Transverse colon (tissue), 4 donors: ENCODE measurements at regions of chr9 and their contacts with region 1.

Region 1: GRCh38 chr9:128548876-128549275 is 3.5 kb upstream of the SPTAN1 start:
- DNase-seq: no peak
- H3K4me3 ChIP-seq: no peak overlapping the region
- H3K27ac ChIP-seq: peak overlapping the region in 3 of 4 donors; percentile 97 to 99 (median 99)
- H3K4me1 ChIP-seq: peaks cover 8 to 35% (median 22%) of the 10 kb centered on the region in 4 donors
- H3K27me3 ChIP-seq: no peaks in the 10 kb centered on the region
- CTCF ChIP-seq: no peak
- EP300 ChIP-seq: no peak
- POLR2A ChIP-seq: no peak

Region 2: DNA sequence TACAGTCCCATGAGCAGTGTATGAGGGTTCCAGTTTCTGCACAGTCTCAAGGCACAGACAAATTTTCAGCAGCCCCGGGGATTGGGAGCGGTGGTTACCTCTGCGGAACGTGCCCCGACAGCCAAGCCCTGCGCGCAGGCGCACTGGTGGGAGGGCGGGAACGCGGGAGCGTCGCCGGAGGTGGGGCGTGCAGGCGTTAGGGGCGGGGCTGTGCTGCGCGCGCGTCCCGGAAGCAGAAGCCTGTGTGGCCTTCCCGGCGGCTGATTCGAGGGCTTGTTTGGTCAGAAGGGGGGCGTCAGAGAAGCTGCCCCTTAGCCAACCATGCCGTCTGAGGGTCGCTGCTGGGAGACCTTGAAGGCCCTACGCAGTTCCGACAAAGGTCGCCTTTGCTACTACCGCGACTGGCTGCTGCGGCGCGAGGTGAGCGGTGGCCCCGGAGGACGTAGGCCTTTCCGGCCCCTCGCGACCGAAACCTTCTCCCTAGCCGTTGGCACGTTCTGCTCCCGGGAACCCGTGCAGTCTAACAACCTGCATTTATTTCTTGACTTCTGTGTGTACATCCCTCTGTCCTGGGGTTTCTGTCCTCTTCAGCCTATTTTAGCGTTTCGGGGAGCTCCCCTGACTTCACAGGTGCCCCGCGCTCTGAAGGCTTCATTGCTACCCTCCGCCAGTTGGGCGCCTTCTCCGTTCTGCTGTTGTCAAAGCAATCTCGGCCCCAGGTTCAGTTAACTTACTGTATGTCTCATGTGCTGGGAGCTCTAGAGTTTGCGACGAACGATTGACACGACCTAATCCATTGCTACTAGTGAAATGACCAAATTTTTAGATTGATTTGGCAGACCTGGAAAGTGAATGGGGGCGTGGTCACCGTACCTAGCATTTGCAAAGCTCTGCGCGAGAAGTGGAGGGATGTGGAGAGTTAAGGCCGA is 44.1 kb before region 1 on chr9 and contains the start of gene GLE1:
- in situ Hi-C with region 1: no loop called
- intact Hi-C with region 1: loop called (anchors 5 kb)
- DNase-seq: peak; percentile 97
- H3K4me3 ChIP-seq: peak within 1 kb of the TSS; percentile 34 to 96 (median 64)
- H3K27ac ChIP-seq: peak within 1 kb of the TSS; percentile 79 to 93 (median 89)
- H3K4me1 ChIP-seq: peaks cover 14 to 22% (median 20%) of the 10 kb centered on the region in 4 donors
- H3K27me3 ChIP-seq: no peaks in the 10 kb centered on the region
- CTCF ChIP-seq: no peak
- EP300 ChIP-seq: no peak
- POLR2A ChIP-seq: peak; percentile 85
- total RNA-seq, gene GLE1: 24.3 to 120 (median 58.7) TPM